ENCODE measurements at regions of chr5 and their contacts with region 1.

Region 1: GRCh38 chr5:42423285-42424165 is at the start of gene GHR:
- DNase-seq: no peak
- ATAC-seq: peak; percentile 72
- H3K4me3 ChIP-seq: no peak within 1 kb of the TSS
- H3K27ac ChIP-seq: no peak within 1 kb of the TSS
- H3K4me1 ChIP-seq: no peaks in the 10 kb centered on the region
- H3K27me3 ChIP-seq: peaks cover 0 to 3% of the 10 kb centered on the region in 2 experiments; a peak in 2 of 4 replicates
- CTCF ChIP-seq: peak; percentile 30 to 46 (median 30); a peak in 4 of 6 replicates
- EP300 ChIP-seq: no peak
- POLR2A ChIP-seq: no peak
- RAD21 ChIP-seq: peak; percentile 39; the same call in 1 of the 2 replicates
- polyA plus RNA-seq, gene GHR: 0.23 to 0.26 TPM

Region 2: DNA sequence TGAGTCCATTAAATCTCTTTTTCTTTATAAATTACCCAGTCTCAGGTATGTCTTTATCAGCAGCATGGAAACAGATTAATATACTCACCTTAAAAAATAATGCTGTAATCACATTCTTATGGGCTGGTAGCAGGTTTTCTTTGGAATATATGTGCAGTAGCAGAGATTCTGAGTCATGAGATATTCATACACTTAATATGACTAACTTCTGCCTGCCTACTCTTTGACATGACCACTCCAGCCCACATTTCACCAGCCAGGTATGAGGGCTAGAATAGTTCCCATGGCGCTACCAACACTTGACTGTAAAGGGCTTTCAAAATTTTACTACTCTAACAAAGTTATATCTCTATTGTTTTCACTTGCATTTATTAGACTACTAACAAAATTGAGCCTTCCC is 74.4 kb before region 1 on chr5:
- CTCF ChIA-PET with region 1: no interaction called
- POLR2A ChIA-PET with region 1: no interaction called
- RAD21 ChIA-PET with region 1: no interaction called
- SMC1A ChIA-PET with region 1: no interaction called
- in situ Hi-C with region 1: no loop called
- intact Hi-C with region 1: no loop called
- DNase-seq: no peak
- ATAC-seq: no peak
- H3K4me3 ChIP-seq: no peak overlapping the region
- H3K27ac ChIP-seq: no peak overlapping the region
- H3K4me1 ChIP-seq: no peaks in the 10 kb centered on the region
- H3K27me3 ChIP-seq: no peaks in the 10 kb centered on the region
- CTCF ChIP-seq: no peak
- EP300 ChIP-seq: no peak
- POLR2A ChIP-seq: no peak
- RAD21 ChIP-seq: no peak

Region 3: DNA sequence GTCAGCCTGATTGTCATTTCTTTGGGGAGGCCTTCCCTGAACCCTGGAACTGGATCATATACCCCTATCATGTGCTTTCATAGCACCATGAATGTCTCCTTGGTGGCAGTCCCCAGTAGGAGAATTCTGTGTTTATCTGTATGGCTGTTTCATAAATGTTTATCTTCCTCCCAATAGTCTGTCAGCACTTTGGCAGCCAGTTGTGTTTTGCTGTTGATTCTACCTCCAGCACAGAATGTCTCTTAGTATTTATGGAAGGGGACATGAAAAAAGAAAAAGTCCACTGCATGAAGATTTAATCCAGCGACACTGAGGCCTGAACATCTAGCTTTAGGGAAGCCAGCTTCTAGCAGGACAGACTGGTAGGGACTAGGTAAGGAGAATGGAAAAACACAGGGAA is 38.0 kb after region 1 on chr5:
- CTCF ChIA-PET with region 1: interaction called, 22 read pairs
- POLR2A ChIA-PET with region 1: interaction called, 18 read pairs
- RAD21 ChIA-PET with region 1: interaction called, 79 read pairs
- SMC1A ChIA-PET with region 1: interaction called, 35 read pairs
- in situ Hi-C with region 1: no loop called
- intact Hi-C with region 1: no loop called
- DNase-seq: no peak
- ATAC-seq: no peak
- H3K4me3 ChIP-seq: no peak overlapping the region
- H3K27ac ChIP-seq: no peak overlapping the region
- H3K4me1 ChIP-seq: no peaks in the 10 kb centered on the region
- H3K27me3 ChIP-seq: no peaks in the 10 kb centered on the region
- CTCF ChIP-seq: no peak
- EP300 ChIP-seq: no peak
- POLR2A ChIP-seq: no peak
- RAD21 ChIP-seq: no peak

Region 4: DNA sequence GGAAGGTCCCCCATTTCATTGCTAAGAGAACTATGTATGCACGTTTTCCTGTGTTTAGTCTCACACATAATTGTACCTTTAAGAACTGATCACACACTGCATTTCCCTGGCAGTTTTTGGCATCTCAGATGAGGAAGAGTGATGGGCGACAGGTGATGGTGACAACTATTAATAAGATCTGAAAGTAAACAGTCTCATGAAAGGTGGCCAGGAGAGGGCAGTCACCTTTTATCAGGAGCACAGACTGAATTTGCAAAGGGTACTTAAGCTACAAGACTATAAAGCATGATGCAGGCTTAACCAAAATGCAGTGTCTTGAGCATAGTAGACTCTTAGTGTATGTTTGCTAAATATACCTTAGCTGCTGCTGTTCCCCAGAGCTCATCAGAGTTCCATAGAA is 91.2 kb after region 1 on chr5:
- CTCF ChIA-PET with region 1: interaction called, 9 read pairs
- POLR2A ChIA-PET with region 1: no interaction called
- RAD21 ChIA-PET with region 1: interaction called, 13 read pairs
- SMC1A ChIA-PET with region 1: interaction called, 11 read pairs
- in situ Hi-C with region 1: no loop called
- intact Hi-C with region 1: no loop called
- DNase-seq: no peak
- ATAC-seq: peak; percentile 39; the same call in 2 of the 3 replicates
- H3K4me3 ChIP-seq: no peak overlapping the region
- H3K27ac ChIP-seq: no peak overlapping the region
- H3K4me1 ChIP-seq: no peaks in the 10 kb centered on the region
- H3K27me3 ChIP-seq: no peaks in the 10 kb centered on the region
- CTCF ChIP-seq: peak in 2 of 3 experiments; percentile 8 to 14; a peak in 2 of 6 replicates
- EP300 ChIP-seq: no peak
- POLR2A ChIP-seq: no peak
- RAD21 ChIP-seq: 0 out of 2 replicates have a peak, but pooled peaks have one; percentile 4

Region 5: DNA sequence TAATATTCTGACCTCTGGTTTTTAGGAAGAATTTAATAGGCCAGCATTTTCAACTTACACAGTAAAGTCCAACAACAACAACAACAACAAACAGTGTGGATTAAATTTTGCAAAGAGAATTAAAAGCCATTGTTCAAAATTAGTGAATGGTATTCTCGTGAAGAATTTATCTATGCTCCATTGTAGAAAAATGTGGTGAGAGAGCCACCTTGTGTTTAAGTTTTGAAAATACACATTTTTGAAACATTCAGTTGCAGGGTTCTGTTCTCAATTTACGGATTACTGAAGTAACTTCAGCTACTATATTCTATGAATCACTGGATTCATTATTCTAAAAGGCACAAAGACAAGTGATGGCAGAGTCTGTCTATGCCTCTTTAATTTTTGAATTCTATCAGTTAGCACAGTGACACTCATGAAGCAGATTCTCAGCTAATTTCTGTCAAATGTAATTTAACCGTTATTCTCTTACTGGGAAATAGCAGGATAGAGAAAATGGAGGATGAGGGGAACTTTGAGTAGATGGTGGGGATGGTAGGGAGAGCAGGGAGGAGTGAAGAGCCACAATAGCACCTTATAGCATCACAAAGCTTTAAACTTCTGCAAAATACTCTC is 344.1 kb after region 1 on chr5:
- CTCF ChIA-PET with region 1: interaction called, 10 read pairs
- POLR2A ChIA-PET with region 1: no interaction called
- RAD21 ChIA-PET with region 1: interaction called, 6 read pairs
- SMC1A ChIA-PET with region 1: interaction called, 5 read pairs
- in situ Hi-C with region 1: no loop called
- intact Hi-C with region 1: no loop called
- DNase-seq: no peak
- ATAC-seq: peak; percentile 53
- H3K4me3 ChIP-seq: no peak overlapping the region
- H3K27ac ChIP-seq: no peak overlapping the region
- H3K4me1 ChIP-seq: no peaks in the 10 kb centered on the region
- H3K27me3 ChIP-seq: no peaks in the 10 kb centered on the region
- CTCF ChIP-seq: peak; percentile 31 to 56 (median 42); a peak in 4 of 6 replicates
- EP300 ChIP-seq: no peak
- POLR2A ChIP-seq: no peak
- RAD21 ChIP-seq: peak; percentile 70

Measured in GM12878 (cell line).